Posterior cingulate gyrus (tissue), 11 donors: ENCODE measurements at regions of chr15 and their contacts with region 1.

Region 1: GRCh38 chr15:83549623-83550022 is 102.5 kb downstream of the SH3GL3 start:
- DNase-seq: no peak

Region 2: GRCh38 chr15:83475551-83475950 is 74.1 kb before region 1 on chr15:
- intact Hi-C with region 1: loop called (anchors 5 kb)
- DNase-seq: no peak

Region 3: DNA sequence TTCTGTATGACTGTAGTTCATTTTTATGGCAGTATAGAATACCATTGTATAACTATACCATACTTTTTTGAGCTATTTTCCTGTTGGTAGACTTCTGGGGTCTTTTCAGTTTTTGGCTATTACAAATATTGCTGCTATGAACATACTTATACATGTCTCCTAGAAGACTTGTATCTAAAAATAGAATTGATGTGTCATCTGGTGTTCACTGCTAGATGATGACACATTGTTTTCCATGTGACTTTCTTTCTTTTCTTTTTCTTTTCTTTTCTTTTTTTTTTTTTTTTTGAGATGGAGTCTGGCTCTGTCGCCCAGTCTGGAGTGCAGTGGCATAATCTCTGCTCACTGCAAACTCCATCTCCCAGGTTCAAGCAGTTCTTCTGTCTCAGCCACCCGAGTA is 32.7 kb before region 1 on chr15:
- intact Hi-C with region 1: no loop called
- DNase-seq: no peak